ENCODE measurements at regions of chr10 and their contacts with region 1.

Region 1: GRCh38 chr10:22666287-22667092 is 47.9 kb downstream of the PIP4K2A start:
- DNase-seq: peak in 13 of 14 experiments; percentile 34 to 91 (median 58)
- ATAC-seq: peak; percentile 90
- H3K4me3 ChIP-seq: peak overlapping the region; percentile 45
- H3K4me3 Mint-ChIP-seq: peak overlapping the region; percentile 77
- H3K27ac ChIP-seq: peak overlapping the region; percentile 42 to 63
- H3K27ac Mint-ChIP-seq: peak overlapping the region; percentile 84
- H3K4me1 ChIP-seq: peaks cover 38% of the 10 kb centered on the region
- H3K4me1 Mint-ChIP-seq: peaks cover 83% of the 10 kb centered on the region
- H3K27me3 ChIP-seq: no peaks in the 10 kb centered on the region
- H3K27me3 Mint-ChIP-seq: no peaks in the 10 kb centered on the region
- CTCF ChIP-seq: no peak

Region 2: GRCh38 chr10:22630234-22631174 is 36.0 kb before region 1 on chr10:
- CTCF ChIA-PET with region 1: interaction called, 4 read pairs
- POLR2A ChIA-PET with region 1: interaction called, 12 read pairs
- intact Hi-C with region 1: no loop called
- DNase-seq: peak in 4 of 14 experiments; percentile 55 to 89 (median 86)
- ATAC-seq: peak; percentile 87
- H3K4me3 ChIP-seq: peak overlapping the region; percentile 42
- H3K4me3 Mint-ChIP-seq: peak overlapping the region; percentile 63
- H3K27ac ChIP-seq: peak overlapping the region; percentile 82 to 87
- H3K27ac Mint-ChIP-seq: peak overlapping the region; percentile 90
- H3K4me1 ChIP-seq: peaks cover 67% of the 10 kb centered on the region
- H3K4me1 Mint-ChIP-seq: peaks cover 99% of the 10 kb centered on the region
- H3K27me3 ChIP-seq: no peaks in the 10 kb centered on the region
- H3K27me3 Mint-ChIP-seq: no peaks in the 10 kb centered on the region
- CTCF ChIP-seq: no peak

Region 3: GRCh38 chr10:22648547-22648961 is 17.9 kb before region 1 on chr10:
- CTCF ChIA-PET with region 1: no interaction called
- POLR2A ChIA-PET with region 1: interaction called, 157 read pairs
- intact Hi-C with region 1: no loop called
- DNase-seq: peak in 3 of 14 experiments; percentile 50 to 60 (median 53)
- ATAC-seq: no peak
- H3K4me3 ChIP-seq: no peak overlapping the region
- H3K4me3 Mint-ChIP-seq: peak overlapping the region; percentile 68
- H3K27ac ChIP-seq: peak overlapping the region; percentile 55 to 58
- H3K27ac Mint-ChIP-seq: peak overlapping the region; percentile 91
- H3K4me1 ChIP-seq: peaks cover 91% of the 10 kb centered on the region
- H3K4me1 Mint-ChIP-seq: peaks cover 91% of the 10 kb centered on the region
- H3K27me3 ChIP-seq: no peaks in the 10 kb centered on the region
- H3K27me3 Mint-ChIP-seq: no peaks in the 10 kb centered on the region
- CTCF ChIP-seq: no peak

Region 4: DNA sequence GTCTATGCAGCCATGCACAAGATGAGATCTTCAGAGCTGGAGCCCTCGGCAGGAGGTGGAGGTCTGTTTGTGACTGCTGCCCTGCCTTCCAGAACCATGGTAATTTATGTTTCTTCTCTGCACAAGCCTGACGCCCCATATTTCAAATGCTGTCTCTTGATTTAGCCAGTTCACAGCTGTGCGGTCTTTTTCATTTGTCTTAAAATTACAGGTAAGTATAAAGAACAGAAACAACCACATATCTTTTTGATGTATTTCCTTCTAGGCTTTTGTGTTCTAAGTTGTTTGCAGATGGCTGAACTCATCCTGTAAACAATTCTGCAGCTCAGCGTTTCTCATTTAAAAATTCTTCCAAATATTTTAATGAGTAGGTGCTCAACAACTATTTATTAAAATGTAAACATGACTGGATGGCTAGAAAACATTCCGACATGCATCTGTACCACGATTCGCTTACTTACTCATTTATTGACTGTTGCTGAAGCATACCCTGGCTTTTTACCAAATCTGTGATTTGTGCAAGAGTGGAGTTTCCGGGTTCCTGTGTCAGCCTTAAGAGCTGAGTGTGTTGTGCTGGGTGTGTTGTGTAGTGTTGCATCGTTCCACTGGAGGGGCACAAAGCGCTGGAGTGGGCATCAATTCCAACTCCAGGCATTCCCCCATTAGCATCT is 11.0 kb before region 1 on chr10:
- CTCF ChIA-PET with region 1: interaction called, 10 read pairs
- POLR2A ChIA-PET with region 1: interaction called, 157 read pairs
- intact Hi-C with region 1: loop called in 1 of 2 experiments (anchors 1 kb)
- DNase-seq: peak in 12 of 14 experiments; percentile 17 to 81 (median 51)
- ATAC-seq: peak; percentile 74
- H3K4me3 ChIP-seq: peak overlapping the region; percentile 27
- H3K4me3 Mint-ChIP-seq: peak overlapping the region; percentile 82
- H3K27ac ChIP-seq: peak overlapping the region; percentile 58 to 67
- H3K27ac Mint-ChIP-seq: peak overlapping the region; percentile 91
- H3K4me1 ChIP-seq: peaks cover 92% of the 10 kb centered on the region
- H3K4me1 Mint-ChIP-seq: peaks cover 96% of the 10 kb centered on the region
- H3K27me3 ChIP-seq: no peaks in the 10 kb centered on the region
- H3K27me3 Mint-ChIP-seq: no peaks in the 10 kb centered on the region
- CTCF ChIP-seq: no peak

Region 5: GRCh38 chr10:22682237-22683139 is 16.0 kb after region 1 on chr10:
- CTCF ChIA-PET with region 1: interaction called, 14 read pairs
- POLR2A ChIA-PET with region 1: interaction called, 57 read pairs
- intact Hi-C with region 1: loop called in 1 of 2 experiments (anchors 1 kb)
- DNase-seq: peak; percentile 23 to 88 (median 54)
- ATAC-seq: peak; percentile 57
- H3K4me3 ChIP-seq: peak overlapping the region; percentile 24
- H3K4me3 Mint-ChIP-seq: peak overlapping the region; percentile 61
- H3K27ac ChIP-seq: peak overlapping the region; percentile 66 to 75
- H3K27ac Mint-ChIP-seq: peak overlapping the region; percentile 99
- H3K4me1 ChIP-seq: peaks cover 75% of the 10 kb centered on the region
- H3K4me1 Mint-ChIP-seq: peaks cover 92% of the 10 kb centered on the region
- H3K27me3 ChIP-seq: no peaks in the 10 kb centered on the region
- H3K27me3 Mint-ChIP-seq: no peaks in the 10 kb centered on the region
- CTCF ChIP-seq: no peak

Region 6: GRCh38 chr10:22693371-22693784 is 26.9 kb after region 1 on chr10:
- CTCF ChIA-PET with region 1: interaction called, 3 read pairs
- POLR2A ChIA-PET with region 1: interaction called, 23 read pairs
- intact Hi-C with region 1: loop called in 1 of 2 experiments (anchors 1 kb)
- DNase-seq: peak in 3 of 14 experiments; percentile 45 to 55 (median 51)
- ATAC-seq: peak; percentile 49
- H3K4me3 ChIP-seq: no peak overlapping the region
- H3K4me3 Mint-ChIP-seq: peak overlapping the region; percentile 54
- H3K27ac ChIP-seq: peak overlapping the region; percentile 8 to 16
- H3K27ac Mint-ChIP-seq: peak overlapping the region; percentile 99
- H3K4me1 ChIP-seq: peaks cover 53% of the 10 kb centered on the region
- H3K4me1 Mint-ChIP-seq: peaks cover 93% of the 10 kb centered on the region
- H3K27me3 ChIP-seq: no peaks in the 10 kb centered on the region
- H3K27me3 Mint-ChIP-seq: no peaks in the 10 kb centered on the region
- CTCF ChIP-seq: no peak

Region 7: DNA sequence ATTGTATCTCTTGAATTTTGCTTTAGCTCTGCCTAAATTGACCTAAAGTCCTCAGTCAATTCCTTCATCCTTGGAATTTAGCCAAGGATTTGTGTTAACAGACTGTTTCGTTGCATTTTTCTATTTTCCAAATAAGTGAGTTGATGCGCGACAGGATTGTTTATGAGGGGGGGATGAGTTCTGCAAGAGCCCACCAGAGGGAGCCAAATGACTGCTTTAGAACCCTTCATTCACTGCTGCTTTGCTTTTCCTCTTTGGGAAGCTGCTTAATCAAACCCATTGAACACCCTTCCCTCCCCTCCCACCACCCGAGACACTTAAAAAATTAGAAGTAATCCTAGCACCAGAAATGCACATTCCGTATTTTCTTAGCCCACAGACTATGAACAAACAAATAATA is 491.9 kb after region 1 on chr10:
- CTCF ChIA-PET with region 1: no interaction called
- POLR2A ChIA-PET with region 1: no interaction called
- intact Hi-C with region 1: no loop called
- DNase-seq: peak in 13 of 14 experiments; percentile 6 to 66 (median 18)
- ATAC-seq: peak; percentile 32
- H3K4me3 ChIP-seq: no peak overlapping the region
- H3K4me3 Mint-ChIP-seq: no peak overlapping the region
- H3K27ac ChIP-seq: no peak overlapping the region
- H3K27ac Mint-ChIP-seq: no peak overlapping the region
- H3K4me1 ChIP-seq: no peaks in the 10 kb centered on the region
- H3K4me1 Mint-ChIP-seq: no peaks in the 10 kb centered on the region
- H3K27me3 ChIP-seq: peaks cover 11 to 16% of the 10 kb centered on the region in 2 experiments
- H3K27me3 Mint-ChIP-seq: peaks cover 48% of the 10 kb centered on the region
- CTCF ChIP-seq: peak; percentile 83